ENCODE measurements at regions of chr1 and their contacts with region 1.

Region 1: DNA sequence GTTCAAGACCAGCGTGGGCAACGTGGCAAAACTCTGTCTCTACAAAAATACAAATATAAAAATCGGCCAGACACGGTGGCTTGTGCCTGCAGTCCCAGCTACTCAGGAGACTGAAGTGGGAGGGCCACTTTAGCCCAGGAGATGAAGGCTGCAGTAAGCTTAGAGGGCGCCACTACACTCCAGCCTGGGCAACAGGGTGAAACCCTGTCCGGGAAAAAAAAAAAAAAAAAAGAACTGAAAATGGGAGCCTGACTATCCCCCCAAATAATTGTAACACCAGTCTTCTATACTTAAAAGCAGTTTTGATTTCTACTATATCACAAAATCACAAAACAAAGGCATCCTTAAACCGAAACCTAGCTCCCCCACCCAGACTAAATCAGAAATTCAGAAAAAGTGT is 60.3 kb downstream of the CDC42BPA start:
- DNase-seq: no peak
- ATAC-seq: no peak
- H3K4me3 Mint-ChIP-seq: no peak overlapping the region
- H3K27ac Mint-ChIP-seq: no peak overlapping the region
- H3K4me1 Mint-ChIP-seq: no peaks in the 10 kb centered on the region
- H3K27me3 Mint-ChIP-seq: peaks cover 3% of the 10 kb centered on the region

Region 2: DNA sequence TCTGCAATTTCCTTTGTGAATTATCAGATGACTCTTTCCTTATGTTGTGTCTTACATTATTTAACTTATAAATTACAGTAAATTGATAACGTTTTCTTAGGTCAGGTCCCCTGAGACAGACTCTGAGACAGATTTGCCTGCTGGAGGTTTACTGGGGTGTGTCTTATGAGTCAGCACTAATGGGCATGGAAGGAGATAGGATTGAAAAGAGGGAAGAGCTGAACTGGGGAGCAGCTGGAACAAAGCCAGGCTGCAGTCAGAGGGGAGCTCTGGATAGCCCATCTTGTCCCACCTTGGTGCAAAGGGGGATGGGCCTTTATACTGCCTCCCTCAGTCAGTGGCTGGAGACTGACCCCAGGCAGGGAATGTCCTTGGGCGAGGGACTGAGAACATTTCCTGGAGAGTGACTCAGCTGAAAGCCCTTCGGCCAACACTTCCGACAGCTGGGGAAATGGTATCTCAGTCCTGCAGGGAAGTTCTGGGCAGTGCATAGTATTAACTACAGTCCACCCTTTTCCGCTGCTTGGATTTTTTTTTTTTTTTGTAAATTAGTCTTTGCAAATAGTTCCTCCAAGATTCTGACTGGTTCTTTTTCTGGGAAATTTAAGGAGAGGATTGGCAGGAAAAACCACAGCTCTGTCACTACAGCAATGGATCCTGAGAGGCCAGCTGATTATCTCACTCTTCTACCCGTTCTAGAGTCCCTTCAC is 99.4 kb after region 1 on chr1:
- CTCF ChIA-PET with region 1: no interaction called
- POLR2A ChIA-PET with region 1: interaction called, 13 read pairs
- intact Hi-C with region 1: no loop called
- DNase-seq: no peak
- ATAC-seq: no peak
- H3K4me3 Mint-ChIP-seq: no peak overlapping the region
- H3K27ac Mint-ChIP-seq: no peak overlapping the region
- H3K4me1 Mint-ChIP-seq: no peaks in the 10 kb centered on the region
- H3K27me3 Mint-ChIP-seq: peaks cover 4% of the 10 kb centered on the region

Measured in activated CD4-positive, alpha-beta T cell treated with anti-CD3 and anti-CD28 coated beads for 36 hours (primary cell).